ENCODE measurements at regions of chr6 and their contacts with region 1.

Region 1: GRCh38 chr6:38493931-38494547 is 145.7 kb downstream of the BTBD9 start:
- DNase-seq: peak; percentile 42 to 77
- ATAC-seq: peak; percentile 62

Region 2: DNA sequence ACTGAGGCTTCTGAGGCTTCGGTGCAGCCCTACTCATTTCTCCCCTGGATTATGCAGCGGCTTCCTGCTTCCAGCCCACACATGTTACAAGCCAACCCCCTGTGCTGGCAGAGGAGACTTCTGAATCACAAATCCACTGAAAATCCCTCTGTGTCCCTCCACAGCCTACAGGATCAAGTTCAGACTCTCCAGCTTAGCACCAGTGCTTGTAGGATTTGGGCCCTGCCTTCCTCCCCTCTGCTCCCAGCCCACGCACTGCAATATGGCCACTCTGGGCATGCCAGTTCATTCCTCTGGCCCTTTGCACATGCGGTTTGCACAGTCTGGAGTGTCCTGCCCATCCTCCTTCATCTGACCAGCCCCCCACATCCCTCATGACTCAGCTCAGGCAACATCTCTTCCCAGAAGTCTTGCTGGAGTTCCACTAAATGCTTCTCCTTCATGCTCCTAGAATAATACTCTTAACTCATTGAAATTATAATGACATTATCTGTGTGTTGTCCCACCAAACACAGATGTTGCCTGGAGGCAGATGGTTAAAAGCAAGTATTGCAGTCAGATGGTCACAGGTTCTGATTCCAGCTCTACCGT is 780.4 kb before region 1 on chr6:
- intact Hi-C with region 1: loop called in 1 of 2 experiments (anchors 10 kb)
- DNase-seq: no peak
- ATAC-seq: no peak

Measured in left colon (tissue), 2 donors.